ENCODE measurements at regions of chr6 and their contacts with region 1.

Region 1: GRCh38 chr6:44338228-44339122 is 4.0 kb upstream of the SPATS1 start:
- DNase-seq: peak; percentile 70
- H3K4me3 ChIP-seq: no peak overlapping the region
- H3K27ac ChIP-seq: no peak overlapping the region
- H3K4me1 ChIP-seq: peaks cover 0 to 6% (median 0%) of the 10 kb centered on the region in 4 donors
- H3K27me3 ChIP-seq: peaks cover 30% of the 10 kb centered on the region
- CTCF ChIP-seq: peak; percentile 66 to 85 (median 75)
- EP300 ChIP-seq: no peak
- POLR2A ChIP-seq: no peak

Region 2: GRCh38 chr6:44172731-44173500 is 165.6 kb before region 1 on chr6:
- in situ Hi-C with region 1: loop called in 2 of 4 experiments (anchors 25 kb)
- intact Hi-C with region 1: no loop called
- DNase-seq: peak; percentile 87
- H3K4me3 ChIP-seq: no peak overlapping the region
- H3K27ac ChIP-seq: no peak overlapping the region
- H3K4me1 ChIP-seq: peaks cover 3 to 18% (median 10%) of the 10 kb centered on the region in 4 donors
- H3K27me3 ChIP-seq: no peaks in the 10 kb centered on the region
- CTCF ChIP-seq: peak; percentile 86 to 91 (median 89)
- EP300 ChIP-seq: no peak
- POLR2A ChIP-seq: no peak

Region 3: GRCh38 chr6:44265007-44265721 is 73.3 kb before region 1 on chr6 and contains the start of gene NFKBIE:
- in situ Hi-C with region 1: loop called in 1 of 4 experiments (anchors 10 kb)
- intact Hi-C with region 1: loop called (anchors 10 kb)
- DNase-seq: peak; percentile 96
- H3K4me3 ChIP-seq: peak within 1 kb of the TSS; percentile 36 to 81 (median 76)
- H3K27ac ChIP-seq: peak within 1 kb of the TSS; percentile 80 to 90 (median 86)
- H3K4me1 ChIP-seq: peaks cover 16 to 39% (median 27%) of the 10 kb centered on the region in 4 donors
- H3K27me3 ChIP-seq: peaks cover 21% of the 10 kb centered on the region
- CTCF ChIP-seq: peak in 2 of 5 experiments; percentile 10 to 15
- EP300 ChIP-seq: no peak
- POLR2A ChIP-seq: peak; percentile 57
- total RNA-seq, gene NFKBIE: 2.6 to 67.3 (median 19.0) TPM

Region 4: DNA sequence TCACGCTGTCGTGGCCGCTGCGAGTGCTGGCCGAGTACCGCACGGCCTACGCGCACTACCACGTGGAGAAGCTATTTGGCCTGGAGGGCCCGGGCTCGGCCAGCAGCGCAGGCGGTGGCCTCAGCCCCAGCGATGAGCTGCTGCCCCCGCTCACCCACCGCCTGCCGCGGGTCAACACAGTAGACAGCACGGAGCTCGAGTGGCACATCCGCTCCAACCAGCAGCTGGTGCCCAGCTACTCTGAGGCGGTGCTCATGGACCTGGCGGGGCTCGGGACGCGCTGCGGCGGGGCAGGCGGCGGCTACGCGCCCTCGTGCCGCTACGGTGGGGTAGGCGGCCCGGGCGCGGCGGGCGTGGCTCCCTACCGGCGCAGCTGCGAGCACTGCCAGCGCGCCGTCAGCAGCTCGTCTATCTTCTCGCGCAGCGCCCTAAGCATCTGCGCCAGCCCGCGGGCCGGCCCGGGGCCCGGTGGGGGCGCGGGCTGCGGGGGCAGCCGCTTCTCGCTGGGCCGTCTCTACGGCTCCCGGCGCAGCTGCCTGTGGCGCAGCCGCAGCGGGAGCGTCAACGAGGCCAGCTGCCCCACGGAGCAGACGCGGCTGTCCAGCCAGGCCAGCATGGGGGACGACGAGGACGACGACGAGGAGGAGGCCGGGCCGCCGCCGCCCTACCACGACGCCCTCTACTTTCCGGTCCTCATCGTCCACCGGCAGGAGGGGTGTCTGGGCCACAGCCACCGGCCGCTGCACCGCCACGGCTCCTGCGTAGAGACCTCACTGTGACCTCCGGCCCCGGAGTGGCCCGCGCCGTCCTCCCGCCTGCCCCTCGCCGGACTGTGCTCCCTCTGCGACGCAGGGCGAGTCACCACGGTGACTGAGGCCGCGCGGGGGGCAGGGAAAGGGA is 62.5 kb before region 1 on chr6:
- in situ Hi-C with region 1: loop called in 1 of 4 experiments (anchors 5 kb)
- intact Hi-C with region 1: loop called (anchors 10 kb)
- DNase-seq: no peak
- H3K4me3 ChIP-seq: peak overlapping the region in 2 of 4 donors; percentile 14 to 36
- H3K27ac ChIP-seq: no peak overlapping the region
- H3K4me1 ChIP-seq: peaks cover 0 to 11% (median 9%) of the 10 kb centered on the region in 4 donors
- H3K27me3 ChIP-seq: peaks cover 85% of the 10 kb centered on the region
- CTCF ChIP-seq: no peak
- EP300 ChIP-seq: no peak
- POLR2A ChIP-seq: no peak

Region 5: GRCh38 chr6:44387346-44388133 is 49.1 kb after region 1 on chr6 and contains the start of gene CDC5L:
- in situ Hi-C with region 1: no loop called
- intact Hi-C with region 1: no loop called
- DNase-seq: peak; percentile 95
- H3K4me3 ChIP-seq: peak within 1 kb of the TSS; percentile 66 to 97 (median 82)
- H3K27ac ChIP-seq: peak within 1 kb of the TSS; percentile 91 to 98 (median 96)
- H3K4me1 ChIP-seq: peaks cover 8 to 32% (median 26%) of the 10 kb centered on the region in 4 donors
- H3K27me3 ChIP-seq: no peaks in the 10 kb centered on the region
- CTCF ChIP-seq: no peak
- EP300 ChIP-seq: no peak
- POLR2A ChIP-seq: peak; percentile 93
- total RNA-seq, gene CDC5L: 8.2 to 49.6 (median 15.2) TPM

Measured in transverse colon (tissue), 4 donors.